ENCODE measurements at regions of chr7 and their contacts with region 1.

Region 1: DNA sequence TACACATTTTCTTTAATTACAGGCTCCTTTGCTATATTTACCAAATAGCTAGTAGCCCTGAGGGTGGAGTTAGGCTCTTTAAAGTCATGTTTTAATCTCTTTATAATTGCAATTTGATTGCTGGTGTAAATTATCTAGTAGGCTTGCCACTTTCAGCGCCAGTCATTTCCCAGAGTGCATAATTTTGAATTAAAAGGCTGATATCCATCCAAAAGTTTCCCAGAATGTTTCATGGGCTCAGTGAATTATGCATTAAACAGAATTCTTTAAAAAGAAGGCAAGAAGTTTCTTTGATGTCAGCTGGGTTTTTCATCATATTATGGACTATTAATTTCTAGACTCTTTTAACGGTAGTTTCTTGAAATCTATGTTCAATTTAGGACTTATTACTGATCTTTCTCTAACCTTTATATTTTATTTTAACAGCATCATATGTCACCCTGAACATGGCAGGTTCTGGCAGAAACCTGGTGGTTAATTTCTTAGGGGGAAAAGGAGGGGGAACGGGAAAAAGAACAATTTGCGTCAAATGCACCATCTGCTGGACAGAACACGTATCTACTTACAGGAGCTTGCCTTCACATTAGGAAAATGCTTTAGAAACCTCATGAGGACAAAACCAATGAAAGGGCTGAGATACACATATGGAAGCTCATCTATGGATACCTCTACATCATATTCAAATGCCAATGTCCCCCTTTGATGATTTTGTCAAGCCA is 171.1 kb downstream of the GRM3 start:
- H3K4me3 ChIP-seq: no peak overlapping the region
- H3K27ac ChIP-seq: no peak overlapping the region
- H3K4me1 ChIP-seq: no peaks in the 10 kb centered on the region
- CTCF ChIP-seq: peak; percentile 23; the same call in 1 of the 2 replicates

Region 2: DNA sequence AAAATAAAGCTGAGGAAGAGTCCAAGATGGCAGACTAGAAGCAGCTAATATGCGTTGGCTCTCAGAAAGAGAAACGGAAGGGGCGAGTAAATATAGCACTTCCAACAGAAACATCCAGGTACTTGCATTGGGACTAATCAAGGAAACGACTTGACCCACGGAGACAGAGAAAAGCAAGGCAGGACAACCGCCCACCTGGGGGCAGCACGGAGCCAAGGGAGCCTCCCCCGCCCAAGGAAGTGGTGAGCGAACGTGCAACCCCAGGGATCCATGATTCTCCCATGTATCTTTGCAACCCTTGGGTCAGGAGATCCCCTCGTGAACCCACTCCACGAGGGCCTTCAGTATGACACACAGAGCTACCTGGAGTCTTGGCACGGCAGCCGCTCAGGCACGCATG is 216.5 kb before region 1 on chr7:
- CTCF ChIA-PET with region 1: interaction called, 20 read pairs
- POLR2A ChIA-PET with region 1: no interaction called
- H3K4me3 ChIP-seq: no peak overlapping the region
- H3K27ac ChIP-seq: no peak overlapping the region
- H3K4me1 ChIP-seq: no peaks in the 10 kb centered on the region
- CTCF ChIP-seq: no peak

Region 3: DNA sequence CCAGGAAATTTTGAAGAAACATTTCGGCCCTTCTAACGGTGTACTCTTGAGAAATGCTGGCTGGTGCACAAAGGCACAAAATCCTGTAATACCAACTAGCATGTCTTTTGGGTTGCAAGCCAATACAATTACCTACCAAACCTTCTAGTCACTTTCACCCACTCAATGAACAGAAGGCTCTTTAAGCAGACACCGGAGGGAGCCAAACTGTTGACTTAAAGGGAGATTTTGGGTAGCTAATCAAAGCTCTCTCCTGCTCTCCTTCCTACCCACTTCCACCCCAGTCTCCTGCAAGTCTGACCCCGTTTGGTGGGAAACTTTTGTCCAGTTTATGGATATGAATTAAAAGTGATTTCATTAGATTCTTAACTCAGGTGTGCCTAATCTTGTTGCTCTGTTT is 147.1 kb before region 1 on chr7:
- CTCF ChIA-PET with region 1: interaction called, 86 read pairs
- POLR2A ChIA-PET with region 1: no interaction called
- H3K4me3 ChIP-seq: no peak overlapping the region
- H3K27ac ChIP-seq: no peak overlapping the region
- H3K4me1 ChIP-seq: no peaks in the 10 kb centered on the region
- CTCF ChIP-seq: peak; percentile 18; the same call in 1 of the 2 replicates

Region 4: GRCh38 chr7:86904949-86905834 is 90.4 kb after region 1 on chr7:
- CTCF ChIA-PET with region 1: interaction called, 16 read pairs
- POLR2A ChIA-PET with region 1: no interaction called
- H3K4me3 ChIP-seq: no peak overlapping the region
- H3K27ac ChIP-seq: no peak overlapping the region
- H3K4me1 ChIP-seq: no peaks in the 10 kb centered on the region
- CTCF ChIP-seq: no peak